GM23248 (cell line): ENCODE measurements at regions of chr5 and their contacts with region 1.

Region 1: DNA sequence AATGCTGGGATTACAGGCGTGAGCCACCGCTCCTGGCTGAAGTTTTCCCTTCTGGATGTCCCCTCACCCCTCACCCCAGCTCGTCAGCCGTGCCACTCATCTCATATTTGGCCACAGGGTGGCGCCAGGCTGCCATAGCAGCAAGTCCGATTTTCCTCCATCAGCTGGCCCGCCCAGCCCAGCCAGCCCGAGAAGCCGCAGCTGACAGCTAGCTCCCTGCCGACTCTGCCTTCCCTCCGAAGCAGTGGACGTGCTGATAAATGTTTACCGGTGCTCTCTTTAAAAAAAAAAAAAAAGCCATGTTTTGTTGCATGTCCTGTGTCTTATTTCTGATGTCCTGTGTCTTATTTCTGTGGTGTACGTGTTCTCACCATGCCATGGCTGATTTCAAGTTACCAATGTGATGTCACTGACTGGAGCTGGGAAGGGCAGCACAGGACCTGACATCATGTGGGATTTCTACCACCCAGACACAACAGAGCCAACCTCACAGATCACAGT is 58.3 kb downstream of the PFDN1 start:
- DNase-seq: peak; percentile 94
- H3K4me3 ChIP-seq: no peak overlapping the region
- H3K27ac ChIP-seq: no peak overlapping the region
- H3K4me1 ChIP-seq: peaks cover 42% of the 10 kb centered on the region
- H3K27me3 ChIP-seq: no peaks in the 10 kb centered on the region

Region 2: GRCh38 chr5:140351609-140352334 is 107.2 kb after region 1 on chr5:
- in situ Hi-C with region 1: loop called (anchors 5 kb)
- DNase-seq: peak; percentile 71
- H3K4me3 ChIP-seq: no peak overlapping the region
- H3K27ac ChIP-seq: no peak overlapping the region
- H3K4me1 ChIP-seq: peaks cover 3% of the 10 kb centered on the region; the same call in 1 of the 2 replicates
- H3K27me3 ChIP-seq: no peaks in the 10 kb centered on the region